IMR-90 (cell line): ENCODE measurements at regions of chr4 and their contacts with region 1.

Region 1: DNA sequence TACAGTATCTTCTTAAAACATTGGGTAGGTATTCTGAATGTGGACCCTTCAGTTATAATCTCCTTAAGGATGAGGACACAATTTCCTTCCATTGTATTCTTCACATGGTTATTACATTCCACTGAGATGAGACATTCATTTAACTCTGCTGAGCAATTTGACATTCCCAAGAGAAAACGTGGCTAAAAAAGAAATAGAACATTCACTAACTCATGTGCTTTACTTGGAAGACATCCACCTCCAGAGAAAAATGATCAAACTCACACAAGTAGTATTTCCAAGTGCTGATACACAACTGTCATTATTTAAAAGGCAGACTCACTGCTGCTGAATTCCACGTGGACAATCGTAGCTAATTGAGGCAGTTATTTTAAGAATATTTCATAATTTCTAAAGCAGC is 227.9 kb upstream of the ANKRD50 start:
- DNase-seq: peak; percentile 98
- ATAC-seq: peak; percentile 68
- H3K4me3 ChIP-seq: no peak overlapping the region
- H3K27ac ChIP-seq: no peak overlapping the region
- H3K4me1 ChIP-seq: peaks cover 3% of the 10 kb centered on the region
- H3K27me3 ChIP-seq: no peaks in the 10 kb centered on the region
- CTCF ChIP-seq: no peak
- POLR2A ChIP-seq: no peak
- RAD21 ChIP-seq: no peak

Region 2: DNA sequence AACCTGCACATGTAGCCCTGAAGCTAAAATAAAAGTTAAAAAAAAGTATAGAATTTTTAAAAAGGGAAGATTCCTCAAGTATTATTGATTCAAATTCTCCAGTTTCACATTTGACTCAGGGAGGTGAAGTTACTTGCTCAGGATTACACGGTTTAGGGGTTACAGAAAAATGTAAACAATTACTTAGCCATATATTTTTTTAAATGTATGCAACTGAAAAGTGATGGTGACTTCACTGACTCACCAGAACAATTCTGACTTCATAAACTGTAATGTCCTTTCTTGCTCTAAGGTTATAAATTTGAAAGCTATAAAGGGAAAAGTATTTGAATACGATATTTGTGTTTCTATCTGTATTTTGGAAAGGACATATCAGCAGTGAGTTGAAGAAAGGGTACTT is 1172.6 kb before region 1 on chr4:
- CTCF ChIA-PET with region 1: no interaction called
- POLR2A ChIA-PET with region 1: no interaction called
- dilution Hi-C with region 1: no loop called
- in situ Hi-C with region 1: no loop called
- intact Hi-C with region 1: loop called (anchors 5 kb)
- DNase-seq: peak; percentile 80
- ATAC-seq: peak; percentile 79
- H3K4me3 ChIP-seq: no peak overlapping the region
- H3K27ac ChIP-seq: peak overlapping the region; percentile 89; the same call in 1 of the 2 replicates
- H3K4me1 ChIP-seq: peaks cover 3% of the 10 kb centered on the region
- H3K27me3 ChIP-seq: no peaks in the 10 kb centered on the region
- CTCF ChIP-seq: no peak
- POLR2A ChIP-seq: no peak
- RAD21 ChIP-seq: no peak

Region 3: GRCh38 chr4:124803641-124804040 is 136.7 kb before region 1 on chr4:
- CTCF ChIA-PET with region 1: no interaction called
- POLR2A ChIA-PET with region 1: no interaction called
- dilution Hi-C with region 1: no loop called
- in situ Hi-C with region 1: no loop called
- intact Hi-C with region 1: no loop called
- DNase-seq: peak; percentile 71
- ATAC-seq: 0 out of 2 replicates have a peak, but pooled peaks have one; percentile 44
- H3K4me3 ChIP-seq: no peak overlapping the region
- H3K27ac ChIP-seq: no peak overlapping the region
- H3K4me1 ChIP-seq: no peaks in the 10 kb centered on the region
- H3K27me3 ChIP-seq: no peaks in the 10 kb centered on the region
- CTCF ChIP-seq: no peak
- POLR2A ChIP-seq: no peak
- RAD21 ChIP-seq: no peak

Region 4: DNA sequence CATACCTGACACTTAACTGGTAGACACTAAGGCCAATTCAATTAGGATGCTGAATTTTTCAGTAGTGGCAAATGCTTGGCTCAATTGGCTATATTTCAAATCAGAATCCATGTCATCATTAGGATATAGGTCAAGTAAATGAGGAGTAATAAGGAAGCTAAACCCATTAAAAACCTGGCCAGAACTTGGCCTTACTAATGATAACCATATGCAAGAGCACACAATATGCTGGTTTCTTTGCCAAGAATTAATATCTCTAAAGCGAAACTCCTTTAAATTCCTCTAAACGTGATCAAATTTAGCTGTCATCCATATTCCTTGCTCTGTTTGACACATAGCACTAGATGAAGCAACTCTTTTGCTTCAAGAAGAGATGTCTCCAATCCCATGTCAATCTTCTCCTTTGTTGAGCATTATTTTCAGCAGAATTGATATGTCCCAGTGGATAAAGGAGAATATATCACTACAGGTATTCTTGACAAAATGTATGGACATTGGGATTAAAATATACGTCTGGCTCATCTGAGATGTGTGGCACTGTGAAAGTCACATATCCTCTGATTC is 21.7 kb before region 1 on chr4:
- CTCF ChIA-PET with region 1: no interaction called
- POLR2A ChIA-PET with region 1: no interaction called
- dilution Hi-C with region 1: no loop called
- in situ Hi-C with region 1: no loop called
- intact Hi-C with region 1: no loop called
- DNase-seq: no peak
- ATAC-seq: no peak
- H3K4me3 ChIP-seq: no peak overlapping the region
- H3K27ac ChIP-seq: no peak overlapping the region
- H3K4me1 ChIP-seq: no peaks in the 10 kb centered on the region
- H3K27me3 ChIP-seq: no peaks in the 10 kb centered on the region
- CTCF ChIP-seq: no peak
- POLR2A ChIP-seq: no peak
- RAD21 ChIP-seq: no peak

Region 5: GRCh38 chr4:125244848-125245450 is 304.6 kb after region 1 on chr4:
- CTCF ChIA-PET with region 1: no interaction called
- POLR2A ChIA-PET with region 1: no interaction called
- dilution Hi-C with region 1: no loop called
- in situ Hi-C with region 1: no loop called
- intact Hi-C with region 1: loop called (anchors 10 kb)
- DNase-seq: peak; percentile 47
- ATAC-seq: peak; percentile 56; the same call in 1 of the 2 replicates
- H3K4me3 ChIP-seq: no peak overlapping the region
- H3K27ac ChIP-seq: no peak overlapping the region
- H3K4me1 ChIP-seq: peaks cover 3% of the 10 kb centered on the region
- H3K27me3 ChIP-seq: no peaks in the 10 kb centered on the region
- CTCF ChIP-seq: peak; percentile 54
- POLR2A ChIP-seq: no peak
- RAD21 ChIP-seq: peak; percentile 57